ENCODE measurements at regions of chr19 and their contacts with region 1.

Region 1: GRCh38 chr19:14347999-14348889 is 33.0 kb upstream of the ADGRE5 start:
- DNase-seq: peak; percentile 34
- H3K4me3 ChIP-seq: peak overlapping the region; percentile 4 to 6
- H3K27ac ChIP-seq: no peak overlapping the region
- H3K4me1 ChIP-seq: no peaks in the 10 kb centered on the region
- H3K27me3 ChIP-seq: peaks cover 3% of the 10 kb centered on the region
- CTCF ChIP-seq: peak; percentile 74 to 95 (median 84)
- POLR2A ChIP-seq: no peak

Region 2: DNA sequence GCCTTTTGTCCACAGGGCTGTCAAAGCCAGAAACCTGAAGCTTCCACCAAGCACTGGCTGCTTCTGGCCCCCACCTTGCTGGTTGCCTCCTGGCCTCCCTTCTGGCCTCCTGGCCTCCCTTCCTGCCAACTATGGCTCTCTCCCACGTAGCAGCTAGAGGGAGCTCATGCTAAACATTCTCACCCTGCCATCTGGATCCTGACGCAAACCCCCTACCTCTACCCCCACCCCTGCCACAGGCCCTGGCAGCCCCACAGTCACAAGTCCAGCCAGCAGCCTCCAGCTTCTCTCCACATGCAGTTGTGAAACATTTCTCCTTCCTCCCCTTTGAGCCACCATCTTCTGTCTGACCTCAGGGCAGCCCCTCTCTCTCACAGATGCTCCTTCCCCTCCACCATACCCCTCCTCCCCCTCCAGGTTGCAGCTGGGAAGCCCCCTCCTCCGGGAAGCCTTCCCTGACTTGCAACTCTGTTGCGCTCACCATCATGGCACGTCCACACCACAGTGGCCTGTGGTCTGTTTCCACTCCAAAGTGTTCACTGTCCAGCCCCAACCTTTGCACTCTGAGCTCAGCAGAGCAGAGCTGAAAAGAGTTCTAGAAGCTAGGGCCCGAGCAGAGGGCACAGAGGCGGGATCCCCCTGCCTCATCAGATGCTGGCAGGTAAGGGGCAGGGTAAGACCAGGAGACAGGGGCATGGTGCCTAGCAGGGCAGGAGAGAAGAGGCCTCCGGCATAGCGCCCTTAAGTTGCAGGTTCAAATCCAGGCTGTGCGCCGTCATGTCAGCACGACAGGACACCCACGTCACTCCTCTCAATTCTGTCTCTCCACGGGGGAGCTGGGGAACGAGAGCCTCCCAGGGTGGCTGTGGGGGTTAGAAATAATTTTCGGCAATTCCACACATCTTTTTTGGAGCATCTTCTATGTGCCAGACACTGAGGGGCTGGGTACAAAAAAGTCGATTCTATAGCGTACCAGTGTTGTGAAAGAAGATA is 149.6 kb before region 1 on chr19:
- intact Hi-C with region 1: loop called (anchors 5 kb)
- DNase-seq: no peak
- H3K4me3 ChIP-seq: no peak overlapping the region
- H3K27ac ChIP-seq: no peak overlapping the region
- H3K4me1 ChIP-seq: no peaks in the 10 kb centered on the region
- H3K27me3 ChIP-seq: no peaks in the 10 kb centered on the region
- CTCF ChIP-seq: no peak
- POLR2A ChIP-seq: no peak